ENCODE measurements at regions of chr15 and their contacts with region 1.

Region 1: DNA sequence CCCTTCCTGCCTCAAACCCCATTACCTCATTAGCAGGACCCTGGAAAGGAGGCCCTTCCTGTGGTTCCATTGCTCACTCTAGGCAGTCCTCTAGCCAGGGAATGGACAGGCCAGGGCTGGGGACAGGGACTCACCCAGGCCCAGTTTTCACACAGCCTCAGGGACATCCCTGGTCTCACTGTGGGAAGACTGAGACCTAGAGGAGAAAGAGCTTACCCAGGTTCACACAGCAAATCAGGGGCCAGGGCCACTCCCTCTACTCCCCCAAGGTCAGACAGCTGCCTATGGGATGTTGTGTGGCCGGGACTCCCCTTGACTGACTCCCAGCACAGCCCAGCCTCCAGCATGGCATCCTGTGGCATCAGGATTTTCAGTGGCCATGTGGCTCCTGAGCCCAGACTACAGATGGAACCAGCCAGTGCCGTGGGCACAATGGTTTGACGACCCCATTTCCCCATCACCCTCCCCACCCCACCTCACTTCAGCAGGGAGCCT is 49.3 kb downstream of the ADAMTS7 start:
- DNase-seq: peak; percentile 44

Region 2: DNA sequence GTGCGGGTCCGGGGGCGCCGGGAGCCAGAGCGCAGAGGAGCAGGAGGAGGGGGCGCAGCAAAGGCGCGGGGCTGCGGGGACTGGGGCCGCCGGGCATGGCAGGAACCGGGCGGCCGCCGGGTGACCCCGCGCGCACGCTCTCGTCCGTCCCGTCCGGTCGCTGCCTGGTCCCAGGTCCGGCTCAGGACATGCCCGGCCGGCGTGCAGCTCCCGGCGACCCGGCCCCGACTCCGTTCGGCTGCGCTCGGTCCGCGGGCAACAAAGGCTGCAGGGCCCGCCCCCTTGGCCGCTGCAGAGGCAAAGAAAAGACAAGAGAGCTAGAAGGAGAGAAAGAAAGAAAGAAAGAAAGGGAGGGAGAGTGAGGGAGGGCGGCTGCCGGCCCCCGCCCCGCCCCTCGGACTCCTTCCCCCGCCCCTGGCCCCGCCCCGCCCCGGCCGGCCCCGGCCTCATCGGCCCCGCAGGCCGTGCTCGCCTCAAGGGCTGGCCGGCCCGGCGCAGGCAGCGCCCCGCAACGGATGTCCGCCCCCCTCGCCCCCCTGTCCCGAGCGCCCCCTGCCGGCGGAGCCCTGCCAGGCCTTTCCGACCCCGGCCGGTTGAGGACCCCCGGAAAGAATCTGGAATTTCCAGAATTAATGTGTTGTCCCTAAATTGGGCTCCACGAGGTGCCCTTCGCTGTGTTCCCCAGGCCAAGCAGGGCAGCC is 49.3 kb after region 1 on chr15 and contains the start of gene ADAMTS7:
- intact Hi-C with region 1: loop called (anchors 2 kb)
- DNase-seq: peak; percentile 86
- total RNA-seq, gene ADAMTS7: 17.8 TPM

Measured in cardiac septum (tissue), 1 donor.